Caco-2 (cell line): ENCODE measurements at regions of chr11 and their contacts with region 1.

Region 1: GRCh38 chr11:69436973-69437875 is 44.2 kb upstream of the LINC01488 start:
- DNase-seq: peak; percentile 100
- H3K4me3 ChIP-seq: no peak overlapping the region
- H3K4me3 Mint-ChIP-seq: peak overlapping the region; percentile 44
- H3K27ac Mint-ChIP-seq: peak overlapping the region; percentile 92
- H3K4me1 ChIP-seq: peaks cover 75% of the 10 kb centered on the region
- H3K4me1 Mint-ChIP-seq: peaks cover 62% of the 10 kb centered on the region
- H3K27me3 ChIP-seq: no peaks in the 10 kb centered on the region
- H3K27me3 Mint-ChIP-seq: no peaks in the 10 kb centered on the region
- CTCF ChIP-seq: peak; percentile 42 to 57

Region 2: GRCh38 chr11:69122642-69123431 is 314.4 kb before region 1 on chr11:
- CTCF ChIA-PET with region 1: interaction called, 4 read pairs
- POLR2A ChIA-PET with region 1: interaction called, 3 read pairs
- intact Hi-C with region 1: loop called (anchors 2 kb)
- DNase-seq: peak; percentile 98 to 100
- H3K4me3 ChIP-seq: peak overlapping the region; percentile 6
- H3K4me3 Mint-ChIP-seq: peak overlapping the region; percentile 76
- H3K27ac Mint-ChIP-seq: peak overlapping the region; percentile 97
- H3K4me1 ChIP-seq: peaks cover 35% of the 10 kb centered on the region
- H3K4me1 Mint-ChIP-seq: peaks cover 40% of the 10 kb centered on the region
- H3K27me3 ChIP-seq: no peaks in the 10 kb centered on the region
- H3K27me3 Mint-ChIP-seq: no peaks in the 10 kb centered on the region
- CTCF ChIP-seq: no peak

Region 3: DNA sequence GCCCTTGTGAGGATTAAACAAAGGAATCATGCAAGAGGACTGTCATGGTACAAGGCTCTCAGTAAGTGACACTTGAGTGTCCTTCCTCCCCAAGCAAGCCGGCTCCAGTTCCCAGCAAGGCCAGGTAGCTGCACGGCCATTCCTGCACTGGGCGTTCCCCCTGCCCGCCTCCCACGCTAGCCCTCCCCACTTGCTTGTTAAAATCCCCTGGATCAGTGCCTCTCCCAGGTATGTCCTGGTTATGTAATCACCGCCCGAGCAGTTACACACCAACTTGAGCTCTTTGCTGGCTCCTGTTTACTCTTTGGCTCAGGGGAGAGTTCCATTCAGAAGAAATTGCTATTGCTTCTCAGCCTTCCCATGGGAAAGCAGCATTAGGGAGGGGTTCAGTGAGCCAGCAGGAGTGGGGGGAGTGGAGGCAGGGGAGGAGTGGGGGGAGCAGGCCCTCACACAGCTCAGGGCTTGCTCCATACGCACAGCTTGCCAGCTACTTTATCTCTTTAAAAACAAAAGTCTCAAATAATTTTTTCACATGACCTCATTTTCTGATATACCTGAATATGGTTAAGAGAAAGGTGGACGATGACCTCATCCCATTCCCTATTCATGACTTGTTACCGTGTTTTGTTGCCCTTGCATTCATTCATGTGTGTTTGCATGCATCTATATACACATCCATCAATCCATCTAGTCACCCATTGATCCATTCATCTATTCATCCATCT is 162.5 kb before region 1 on chr11:
- CTCF ChIA-PET with region 1: interaction called, 5 read pairs
- POLR2A ChIA-PET with region 1: no interaction called
- intact Hi-C with region 1: loop called (anchors 2 kb)
- DNase-seq: peak; percentile 96 to 98
- H3K4me3 ChIP-seq: no peak overlapping the region
- H3K4me3 Mint-ChIP-seq: peak overlapping the region; percentile 3
- H3K27ac Mint-ChIP-seq: peak overlapping the region; percentile 5
- H3K4me1 ChIP-seq: peaks cover 51% of the 10 kb centered on the region
- H3K4me1 Mint-ChIP-seq: peaks cover 19% of the 10 kb centered on the region
- H3K27me3 ChIP-seq: no peaks in the 10 kb centered on the region
- H3K27me3 Mint-ChIP-seq: no peaks in the 10 kb centered on the region
- CTCF ChIP-seq: no peak

Region 4: GRCh38 chr11:69287968-69288882 is 149.0 kb before region 1 on chr11:
- CTCF ChIA-PET with region 1: interaction called, 5 read pairs
- POLR2A ChIA-PET with region 1: interaction called, 3 read pairs
- intact Hi-C with region 1: loop called (anchors 1 kb)
- DNase-seq: peak; percentile 98 to 99
- H3K4me3 ChIP-seq: peak overlapping the region; percentile 15
- H3K4me3 Mint-ChIP-seq: peak overlapping the region; percentile 65
- H3K27ac Mint-ChIP-seq: peak overlapping the region; percentile 48
- H3K4me1 ChIP-seq: peaks cover 53% of the 10 kb centered on the region
- H3K4me1 Mint-ChIP-seq: peaks cover 37% of the 10 kb centered on the region
- H3K27me3 ChIP-seq: no peaks in the 10 kb centered on the region
- H3K27me3 Mint-ChIP-seq: no peaks in the 10 kb centered on the region
- CTCF ChIP-seq: no peak

Region 5: GRCh38 chr11:69382131-69383128 is 54.8 kb before region 1 on chr11:
- CTCF ChIA-PET with region 1: interaction called, 5 read pairs
- POLR2A ChIA-PET with region 1: interaction called, 11 read pairs
- intact Hi-C with region 1: loop called (anchors 1 kb)
- DNase-seq: peak; percentile 93 to 94
- H3K4me3 ChIP-seq: peak overlapping the region; percentile 56
- H3K4me3 Mint-ChIP-seq: peak overlapping the region; percentile 82
- H3K27ac Mint-ChIP-seq: peak overlapping the region; percentile 93
- H3K4me1 ChIP-seq: peaks cover 15% of the 10 kb centered on the region
- H3K4me1 Mint-ChIP-seq: peaks cover 15% of the 10 kb centered on the region
- H3K27me3 ChIP-seq: no peaks in the 10 kb centered on the region
- H3K27me3 Mint-ChIP-seq: no peaks in the 10 kb centered on the region
- CTCF ChIP-seq: peak in 1 of 2 experiments; percentile 13

Region 6: DNA sequence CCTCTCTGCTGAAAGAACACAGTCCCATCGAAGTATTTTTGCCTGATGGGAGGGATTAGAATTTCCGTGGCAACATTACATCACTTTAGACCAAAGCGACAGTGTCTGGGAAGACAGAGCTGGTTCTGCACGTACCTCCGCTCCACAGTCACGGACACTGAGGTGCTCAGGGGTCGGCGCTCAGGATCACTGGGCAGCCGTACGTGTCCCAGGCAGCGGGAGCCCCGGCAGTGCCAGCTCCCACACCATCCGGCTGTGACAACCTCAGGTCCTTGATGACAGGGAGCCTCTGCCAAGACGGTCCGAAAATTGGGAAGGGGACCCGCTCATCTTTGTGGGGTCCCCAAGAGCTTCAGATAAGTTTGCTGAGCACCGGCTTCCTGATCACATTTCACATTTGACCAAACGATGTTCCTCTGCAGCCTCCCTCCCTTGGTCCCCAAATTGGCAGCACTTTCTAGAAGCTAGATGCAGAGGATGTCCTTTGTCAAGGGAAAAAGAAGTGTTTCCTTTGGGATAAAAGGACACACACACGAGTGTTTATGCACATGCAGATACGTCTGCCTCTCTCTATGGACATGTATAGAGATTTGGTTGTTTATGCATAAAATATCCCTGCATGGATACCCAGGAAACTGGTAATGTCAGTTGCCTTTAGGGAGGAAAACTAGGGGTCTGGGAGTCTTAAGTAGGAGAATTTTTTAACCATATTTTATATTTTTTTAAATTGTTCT is 17.4 kb before region 1 on chr11:
- CTCF ChIA-PET with region 1: interaction called, 5 read pairs
- POLR2A ChIA-PET with region 1: interaction called, 6 read pairs
- intact Hi-C with region 1: loop called (anchors 2 kb)
- DNase-seq: no peak
- H3K4me3 ChIP-seq: no peak overlapping the region
- H3K4me3 Mint-ChIP-seq: no peak overlapping the region
- H3K27ac Mint-ChIP-seq: peak overlapping the region; percentile 94
- H3K4me1 ChIP-seq: peaks cover 25% of the 10 kb centered on the region
- H3K4me1 Mint-ChIP-seq: peaks cover 32% of the 10 kb centered on the region
- H3K27me3 ChIP-seq: no peaks in the 10 kb centered on the region
- H3K27me3 Mint-ChIP-seq: no peaks in the 10 kb centered on the region
- CTCF ChIP-seq: no peak

Region 7: DNA sequence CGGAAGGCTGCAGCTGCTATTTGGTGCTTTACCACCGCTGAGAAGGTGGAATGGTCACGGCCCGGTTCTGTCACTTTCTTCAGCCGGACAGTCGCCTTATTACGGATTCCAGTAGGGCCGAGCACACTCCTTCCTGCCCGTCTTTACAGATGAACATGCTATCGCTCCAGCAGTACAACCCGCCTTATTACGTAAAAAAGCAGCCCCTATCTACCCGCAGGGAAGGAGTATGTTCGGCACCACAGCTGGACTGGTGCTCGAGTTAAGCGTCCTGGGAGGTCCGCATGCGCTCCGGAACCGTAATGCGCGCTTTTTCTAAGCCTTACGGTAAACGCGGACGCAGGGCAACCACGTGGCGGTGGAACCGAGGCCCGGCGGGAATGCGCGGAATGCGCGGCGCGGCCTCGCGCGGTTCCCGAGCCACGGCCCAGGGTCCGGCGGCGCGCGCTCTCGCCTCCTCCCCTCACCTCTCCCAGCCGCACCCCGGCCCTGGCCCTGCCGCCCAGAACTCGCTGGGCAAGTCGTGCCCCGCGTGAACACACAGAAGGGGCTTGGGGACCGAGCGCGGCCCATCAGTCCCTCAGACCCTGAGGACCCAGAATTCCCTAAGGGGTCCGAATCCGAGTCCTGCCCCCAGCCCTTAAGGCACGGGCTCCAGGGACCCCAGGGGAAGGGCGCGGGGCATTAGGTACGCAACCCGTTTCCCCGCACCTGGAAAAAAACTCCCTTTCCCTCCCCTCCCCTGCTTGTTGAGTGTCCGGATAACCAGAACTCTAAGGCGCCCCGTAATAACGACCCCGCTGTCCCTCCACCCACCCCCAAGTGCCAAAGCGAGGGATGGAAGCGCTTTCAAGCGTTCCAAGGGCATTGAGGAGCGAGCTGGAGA is 199.3 kb after region 1 on chr11:
- CTCF ChIA-PET with region 1: interaction called, 3 read pairs
- POLR2A ChIA-PET with region 1: interaction called, 17 read pairs
- intact Hi-C with region 1: loop called (anchors 2 kb)
- DNase-seq: peak; percentile 97 to 98
- H3K4me3 ChIP-seq: peak overlapping the region; percentile 73
- H3K4me3 Mint-ChIP-seq: peak overlapping the region; percentile 96
- H3K27ac Mint-ChIP-seq: peak overlapping the region; percentile 97
- H3K4me1 ChIP-seq: peaks cover 19% of the 10 kb centered on the region
- H3K4me1 Mint-ChIP-seq: peaks cover 25% of the 10 kb centered on the region
- H3K27me3 ChIP-seq: no peaks in the 10 kb centered on the region
- H3K27me3 Mint-ChIP-seq: no peaks in the 10 kb centered on the region
- CTCF ChIP-seq: no peak